ENCODE measurements at regions of chr12 and their contacts with region 1.

Region 1: GRCh38 chr12:49232940-49233841 is 31.7 kb upstream of the TUBA1C start:
- DNase-seq: peak in 1 of 9 donors; percentile 7
- ATAC-seq: no peak
- H3K4me3 ChIP-seq: no peak overlapping the region
- H3K4me3 Mint-ChIP-seq: peak overlapping the region; percentile 68 to 89 (median 85)
- H3K27ac ChIP-seq: no peak overlapping the region
- H3K27ac Mint-ChIP-seq: peak overlapping the region; percentile 65 to 93 (median 89)
- H3K4me1 ChIP-seq: peaks cover 0 to 7% of the 10 kb centered on the region in 2 donors
- H3K4me1 Mint-ChIP-seq: peaks cover 0 to 12% (median 9%) of the 10 kb centered on the region in 7 donors
- H3K27me3 ChIP-seq: no peaks in the 10 kb centered on the region
- H3K27me3 Mint-ChIP-seq: peaks cover 0 to 7% (median 0%) of the 10 kb centered on the region in 5 donors

Region 2: GRCh38 chr12:48995061-48995879 is 237.9 kb before region 1 on chr12:
- CTCF ChIA-PET with region 1: no interaction called
- POLR2A ChIA-PET with region 1: no interaction called
- intact Hi-C with region 1: loop called in 1 of 2 experiments (anchors 2 kb)
- DNase-seq: peak in 3 of 9 donors; percentile 36 to 56 (median 54)
- ATAC-seq: peak; percentile 51
- H3K4me3 ChIP-seq: no peak overlapping the region
- H3K4me3 Mint-ChIP-seq: peak overlapping the region in 9 of 10 donors; percentile 15 to 81 (median 71)
- H3K27ac ChIP-seq: no peak overlapping the region
- H3K27ac Mint-ChIP-seq: peak overlapping the region in 2 of 9 donors; percentile 31 to 90
- H3K4me1 ChIP-seq: peaks cover 13 to 26% of the 10 kb centered on the region in 2 donors
- H3K4me1 Mint-ChIP-seq: peaks cover 24 to 39% (median 32%) of the 10 kb centered on the region in 7 donors
- H3K27me3 ChIP-seq: peaks cover 0 to 25% of the 10 kb centered on the region in 2 donors
- H3K27me3 Mint-ChIP-seq: peaks cover 48 to 75% (median 56%) of the 10 kb centered on the region in 5 donors

Region 3: GRCh38 chr12:49060237-49061156 is 172.7 kb before region 1 on chr12 and contains the start of gene KMT2D:
- CTCF ChIA-PET with region 1: interaction called, 3 read pairs
- POLR2A ChIA-PET with region 1: no interaction called
- intact Hi-C with region 1: loop called (anchors 1 kb)
- DNase-seq: peak; percentile 80 to 94 (median 91)
- ATAC-seq: peak; percentile 86
- H3K4me3 ChIP-seq: peak within 1 kb of the TSS; percentile 87
- H3K4me3 Mint-ChIP-seq: peak within 1 kb of the TSS; percentile 91 to 98 (median 95)
- H3K27ac ChIP-seq: peak within 1 kb of the TSS; percentile 87
- H3K27ac Mint-ChIP-seq: peak within 1 kb of the TSS; percentile 90 to 99 (median 97)
- H3K4me1 ChIP-seq: peaks cover 38 to 40% of the 10 kb centered on the region in 2 donors
- H3K4me1 Mint-ChIP-seq: peaks cover 44 to 55% (median 51%) of the 10 kb centered on the region in 7 donors
- H3K27me3 ChIP-seq: no peaks in the 10 kb centered on the region
- H3K27me3 Mint-ChIP-seq: no peaks in the 10 kb centered on the region
- total RNA-seq, gene KMT2D: 129 to 167 (median 151) TPM

Region 4: GRCh38 chr12:49069507-49070346 is 163.5 kb before region 1 on chr12 and contains the start of gene RHEBL1:
- CTCF ChIA-PET with region 1: interaction called, 5 read pairs
- POLR2A ChIA-PET with region 1: interaction called, 3 read pairs
- intact Hi-C with region 1: loop called (anchors 1 kb)
- DNase-seq: peak; percentile 93 to 99 (median 96)
- ATAC-seq: peak; percentile 100
- H3K4me3 ChIP-seq: peak within 1 kb of the TSS; percentile 99
- H3K4me3 Mint-ChIP-seq: peak within 1 kb of the TSS; percentile 86 to 99 (median 96)
- H3K27ac ChIP-seq: peak within 1 kb of the TSS; percentile 74
- H3K27ac Mint-ChIP-seq: peak within 1 kb of the TSS; percentile 77 to 92 (median 86)
- H3K4me1 ChIP-seq: peaks cover 5 to 13% of the 10 kb centered on the region in 2 donors
- H3K4me1 Mint-ChIP-seq: peaks cover 14 to 31% (median 18%) of the 10 kb centered on the region in 7 donors
- H3K27me3 ChIP-seq: no peaks in the 10 kb centered on the region
- H3K27me3 Mint-ChIP-seq: no peaks in the 10 kb centered on the region
- total RNA-seq, gene RHEBL1: 1.8 to 9.4 (median 3.3) TPM

Region 5: DNA sequence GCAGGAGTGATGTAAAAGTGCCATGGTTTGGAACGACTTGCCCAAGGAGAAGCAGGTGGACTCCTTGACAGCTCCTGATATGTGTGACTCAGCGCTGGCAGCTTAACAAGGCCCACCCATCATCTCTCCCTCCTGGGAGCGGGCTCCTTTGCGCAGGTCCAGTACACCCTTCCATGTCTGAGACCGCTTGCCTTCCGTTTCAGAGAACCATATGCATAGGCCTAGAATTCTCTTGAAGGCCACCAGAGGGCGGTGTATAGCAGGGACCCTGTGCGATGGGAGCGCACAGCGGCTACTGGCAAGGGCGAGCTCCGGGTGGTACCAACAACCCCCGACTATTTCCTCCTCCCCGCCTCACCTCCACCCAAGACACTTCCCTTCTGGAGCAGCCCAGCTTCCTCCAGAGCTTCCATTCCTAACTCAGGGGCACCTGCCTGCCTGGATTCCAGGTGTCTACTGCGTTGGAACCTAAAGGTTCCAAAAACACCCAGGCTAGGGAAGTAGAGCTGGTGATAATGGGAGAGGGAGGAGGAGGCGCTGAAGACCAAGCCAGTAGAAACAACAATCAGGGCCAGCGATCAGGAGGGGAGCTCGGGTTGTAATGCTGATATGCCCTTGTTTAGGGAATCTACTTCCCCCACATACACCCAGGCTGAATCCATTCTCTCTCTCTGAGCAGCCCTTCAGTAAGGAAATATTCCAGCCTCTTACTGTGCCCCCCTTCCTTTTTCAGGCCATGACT is 144.8 kb before region 1 on chr12:
- CTCF ChIA-PET with region 1: interaction called, 20 read pairs
- POLR2A ChIA-PET with region 1: no interaction called
- intact Hi-C with region 1: loop called (anchors 1 kb)
- DNase-seq: peak; percentile 39 to 73 (median 70)
- ATAC-seq: peak; percentile 94
- H3K4me3 ChIP-seq: no peak overlapping the region
- H3K4me3 Mint-ChIP-seq: peak overlapping the region in 7 of 10 donors; percentile 11 to 59 (median 48)
- H3K27ac ChIP-seq: no peak overlapping the region
- H3K27ac Mint-ChIP-seq: peak overlapping the region in 2 of 9 donors; percentile 5 to 34
- H3K4me1 ChIP-seq: peaks cover 35 to 40% of the 10 kb centered on the region in 2 donors
- H3K4me1 Mint-ChIP-seq: peaks cover 22 to 53% (median 38%) of the 10 kb centered on the region in 7 donors
- H3K27me3 ChIP-seq: peaks cover 14 to 37% of the 10 kb centered on the region in 2 donors
- H3K27me3 Mint-ChIP-seq: peaks cover 32 to 58% (median 49%) of the 10 kb centered on the region in 5 donors

Region 6: DNA sequence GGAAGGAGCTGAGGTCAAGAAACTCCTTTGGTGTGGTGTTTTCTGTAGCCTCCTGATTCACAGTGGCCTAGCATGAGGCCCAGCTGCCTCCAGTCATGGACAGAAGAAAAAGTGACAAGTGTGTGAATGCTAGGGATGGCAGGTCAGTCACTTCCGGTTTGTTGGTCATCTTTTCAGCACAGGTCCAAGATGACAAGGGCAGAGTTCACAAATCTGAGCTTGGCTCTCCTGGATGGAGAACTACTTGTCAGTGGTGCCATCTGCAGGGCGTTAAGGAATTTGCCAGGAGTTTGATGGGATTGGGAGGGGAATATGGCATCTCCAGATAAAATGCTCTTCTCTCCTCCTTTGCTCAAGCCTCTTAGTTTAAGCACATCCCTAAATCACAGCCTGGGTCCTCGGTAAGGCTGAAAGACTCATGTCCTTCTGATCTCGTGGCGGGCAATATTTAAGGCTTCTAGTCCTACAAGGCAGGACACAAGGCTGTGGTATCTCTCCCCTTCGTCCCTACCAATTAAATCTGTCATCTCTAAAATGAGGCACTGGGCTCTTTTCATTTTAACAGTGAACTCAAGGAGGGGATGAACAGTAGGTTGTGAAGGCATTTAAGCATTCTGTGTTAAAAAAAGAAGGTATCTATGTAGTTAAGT is 112.0 kb before region 1 on chr12:
- CTCF ChIA-PET with region 1: interaction called, 10 read pairs
- POLR2A ChIA-PET with region 1: no interaction called
- intact Hi-C with region 1: no loop called
- DNase-seq: no peak
- ATAC-seq: peak; percentile 20
- H3K4me3 ChIP-seq: no peak overlapping the region
- H3K4me3 Mint-ChIP-seq: no peak overlapping the region
- H3K27ac ChIP-seq: no peak overlapping the region
- H3K27ac Mint-ChIP-seq: no peak overlapping the region
- H3K4me1 ChIP-seq: no peaks in the 10 kb centered on the region
- H3K4me1 Mint-ChIP-seq: peaks cover 0 to 5% (median 0%) of the 10 kb centered on the region in 7 donors
- H3K27me3 ChIP-seq: no peaks in the 10 kb centered on the region
- H3K27me3 Mint-ChIP-seq: peaks cover 0 to 8% (median 0%) of the 10 kb centered on the region in 5 donors

Region 7: GRCh38 chr12:49200919-49201594 is 32.1 kb before region 1 on chr12:
- CTCF ChIA-PET with region 1: no interaction called
- POLR2A ChIA-PET with region 1: no interaction called
- intact Hi-C with region 1: no loop called
- DNase-seq: peak in 6 of 9 donors; percentile 30 to 64 (median 46)
- ATAC-seq: peak; percentile 92
- H3K4me3 ChIP-seq: no peak overlapping the region
- H3K4me3 Mint-ChIP-seq: no peak overlapping the region
- H3K27ac ChIP-seq: no peak overlapping the region
- H3K27ac Mint-ChIP-seq: peak overlapping the region in 4 of 9 donors; percentile 4 to 75 (median 22)
- H3K4me1 ChIP-seq: peaks cover 0 to 6% of the 10 kb centered on the region in 2 donors
- H3K4me1 Mint-ChIP-seq: peaks cover 7 to 15% (median 14%) of the 10 kb centered on the region in 7 donors
- H3K27me3 ChIP-seq: no peaks in the 10 kb centered on the region
- H3K27me3 Mint-ChIP-seq: peaks cover 0 to 19% (median 0%) of the 10 kb centered on the region in 5 donors

Region 8: GRCh38 chr12:49264738-49265515 is 31.7 kb after region 1 on chr12 and contains the start of gene TUBA1C:
- CTCF ChIA-PET with region 1: no interaction called
- POLR2A ChIA-PET with region 1: interaction called, 3 read pairs
- intact Hi-C with region 1: loop called (anchors 1 kb)
- DNase-seq: peak; percentile 67 to 98 (median 72)
- ATAC-seq: peak; percentile 93
- H3K4me3 ChIP-seq: peak within 1 kb of the TSS; percentile 91
- H3K4me3 Mint-ChIP-seq: peak within 1 kb of the TSS; percentile 88 to 99 (median 92)
- H3K27ac ChIP-seq: peak within 1 kb of the TSS; percentile 68
- H3K27ac Mint-ChIP-seq: peak within 1 kb of the TSS; percentile 65 to 99 (median 89)
- H3K4me1 ChIP-seq: peaks cover 16% of the 10 kb centered on the region in 2 donors
- H3K4me1 Mint-ChIP-seq: peaks cover 4 to 51% (median 11%) of the 10 kb centered on the region in 7 donors
- H3K27me3 ChIP-seq: no peaks in the 10 kb centered on the region
- H3K27me3 Mint-ChIP-seq: peaks cover 0 to 2% (median 0%) of the 10 kb centered on the region in 5 donors
- total RNA-seq, gene TUBA1C: 17.9 to 195 (median 24.1) TPM

Measured in naive thymus-derived CD4-positive, alpha-beta T cell (primary cell).